ENCODE measurements at regions of chr1 and their contacts with region 1.

Region 1: DNA sequence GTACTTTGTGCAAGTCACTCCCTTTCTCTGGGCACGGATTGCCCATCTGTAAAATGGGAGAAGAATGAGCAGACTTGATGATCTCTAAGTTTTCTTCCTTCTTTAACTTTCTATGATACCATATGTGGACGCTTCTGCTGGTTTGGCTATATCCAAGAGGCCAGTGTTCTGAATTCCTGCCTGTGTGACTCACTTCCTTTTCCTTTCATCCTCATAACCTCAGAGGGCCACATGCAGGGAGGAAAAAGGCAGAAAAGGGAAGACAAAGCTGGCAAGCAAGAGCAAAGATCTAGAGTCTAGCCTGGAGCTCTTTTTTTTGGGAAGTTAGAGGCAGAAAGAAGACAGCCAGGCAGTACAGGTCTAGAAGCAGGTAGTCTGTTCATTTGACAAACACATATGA is 151.2 kb downstream of the OMA1 start:
- DNase-seq: no peak
- ATAC-seq: no peak
- H3K4me3 Mint-ChIP-seq: no peak overlapping the region
- H3K27ac Mint-ChIP-seq: no peak overlapping the region
- H3K4me1 Mint-ChIP-seq: no peaks in the 10 kb centered on the region
- H3K27me3 Mint-ChIP-seq: no peaks in the 10 kb centered on the region
- CTCF ChIP-seq: no peak

Region 2: GRCh38 chr1:58363585-58363984 is 31.8 kb before region 1 on chr1:
- CTCF ChIA-PET with region 1: no interaction called
- POLR2A ChIA-PET with region 1: no interaction called
- intact Hi-C with region 1: loop called (anchors 2 kb)
- DNase-seq: no peak
- ATAC-seq: peak; percentile 25
- H3K4me3 Mint-ChIP-seq: no peak overlapping the region
- H3K27ac Mint-ChIP-seq: no peak overlapping the region
- H3K4me1 Mint-ChIP-seq: peaks cover 2% of the 10 kb centered on the region
- H3K27me3 Mint-ChIP-seq: no peaks in the 10 kb centered on the region
- CTCF ChIP-seq: no peak

Region 3: GRCh38 chr1:58432851-58433668 is 37.7 kb after region 1 on chr1:
- CTCF ChIA-PET with region 1: no interaction called
- POLR2A ChIA-PET with region 1: interaction called, 3 read pairs
- intact Hi-C with region 1: loop called (anchors 1 kb)
- DNase-seq: no peak
- ATAC-seq: peak; percentile 71
- H3K4me3 Mint-ChIP-seq: no peak overlapping the region
- H3K27ac Mint-ChIP-seq: no peak overlapping the region
- H3K4me1 Mint-ChIP-seq: no peaks in the 10 kb centered on the region
- H3K27me3 Mint-ChIP-seq: no peaks in the 10 kb centered on the region
- CTCF ChIP-seq: no peak

Region 4: GRCh38 chr1:58497499-58497898 is 102.1 kb after region 1 on chr1:
- CTCF ChIA-PET with region 1: no interaction called
- POLR2A ChIA-PET with region 1: interaction called, 4 read pairs
- intact Hi-C with region 1: loop called (anchors 2 kb)
- DNase-seq: no peak
- ATAC-seq: peak; percentile 58
- H3K4me3 Mint-ChIP-seq: peak overlapping the region; percentile 52
- H3K27ac Mint-ChIP-seq: peak overlapping the region; percentile 85
- H3K4me1 Mint-ChIP-seq: peaks cover 38% of the 10 kb centered on the region
- H3K27me3 Mint-ChIP-seq: no peaks in the 10 kb centered on the region
- CTCF ChIP-seq: no peak

Region 5: GRCh38 chr1:58699011-58699762 is 303.8 kb after region 1 on chr1:
- CTCF ChIA-PET with region 1: no interaction called
- POLR2A ChIA-PET with region 1: no interaction called
- intact Hi-C with region 1: loop called (anchors 5 kb)
- DNase-seq: no peak
- ATAC-seq: no peak
- H3K4me3 Mint-ChIP-seq: peak overlapping the region; percentile 99
- H3K27ac Mint-ChIP-seq: peak overlapping the region; percentile 94
- H3K4me1 Mint-ChIP-seq: peaks cover 15% of the 10 kb centered on the region
- H3K27me3 Mint-ChIP-seq: no peaks in the 10 kb centered on the region
- CTCF ChIP-seq: no peak

Region 6: GRCh38 chr1:58991305-58991704 is 596.0 kb after region 1 on chr1:
- CTCF ChIA-PET with region 1: no interaction called
- POLR2A ChIA-PET with region 1: interaction called, 11 read pairs
- intact Hi-C with region 1: no loop called
- DNase-seq: no peak
- ATAC-seq: no peak
- H3K4me3 Mint-ChIP-seq: peak overlapping the region; percentile 13
- H3K27ac Mint-ChIP-seq: no peak overlapping the region
- H3K4me1 Mint-ChIP-seq: peaks cover 34% of the 10 kb centered on the region
- H3K27me3 Mint-ChIP-seq: no peaks in the 10 kb centered on the region
- CTCF ChIP-seq: no peak

Region 7: GRCh38 chr1:59272507-59272906 is 877.2 kb after region 1 on chr1:
- CTCF ChIA-PET with region 1: no interaction called
- POLR2A ChIA-PET with region 1: no interaction called
- intact Hi-C with region 1: loop called (anchors 5 kb)
- DNase-seq: no peak
- ATAC-seq: peak; percentile 94
- H3K4me3 Mint-ChIP-seq: peak overlapping the region; percentile 57
- H3K27ac Mint-ChIP-seq: peak overlapping the region; percentile 84
- H3K4me1 Mint-ChIP-seq: peaks cover 57% of the 10 kb centered on the region
- H3K27me3 Mint-ChIP-seq: no peaks in the 10 kb centered on the region
- CTCF ChIP-seq: no peak

Measured in activated B cell treated with CpG ODN at 0.5 μM for 24 hours (primary cell).